Left cardiac atrium (tissue), 4 donors: ENCODE measurements at regions of chr11 and their contacts with region 1.

Region 1: DNA sequence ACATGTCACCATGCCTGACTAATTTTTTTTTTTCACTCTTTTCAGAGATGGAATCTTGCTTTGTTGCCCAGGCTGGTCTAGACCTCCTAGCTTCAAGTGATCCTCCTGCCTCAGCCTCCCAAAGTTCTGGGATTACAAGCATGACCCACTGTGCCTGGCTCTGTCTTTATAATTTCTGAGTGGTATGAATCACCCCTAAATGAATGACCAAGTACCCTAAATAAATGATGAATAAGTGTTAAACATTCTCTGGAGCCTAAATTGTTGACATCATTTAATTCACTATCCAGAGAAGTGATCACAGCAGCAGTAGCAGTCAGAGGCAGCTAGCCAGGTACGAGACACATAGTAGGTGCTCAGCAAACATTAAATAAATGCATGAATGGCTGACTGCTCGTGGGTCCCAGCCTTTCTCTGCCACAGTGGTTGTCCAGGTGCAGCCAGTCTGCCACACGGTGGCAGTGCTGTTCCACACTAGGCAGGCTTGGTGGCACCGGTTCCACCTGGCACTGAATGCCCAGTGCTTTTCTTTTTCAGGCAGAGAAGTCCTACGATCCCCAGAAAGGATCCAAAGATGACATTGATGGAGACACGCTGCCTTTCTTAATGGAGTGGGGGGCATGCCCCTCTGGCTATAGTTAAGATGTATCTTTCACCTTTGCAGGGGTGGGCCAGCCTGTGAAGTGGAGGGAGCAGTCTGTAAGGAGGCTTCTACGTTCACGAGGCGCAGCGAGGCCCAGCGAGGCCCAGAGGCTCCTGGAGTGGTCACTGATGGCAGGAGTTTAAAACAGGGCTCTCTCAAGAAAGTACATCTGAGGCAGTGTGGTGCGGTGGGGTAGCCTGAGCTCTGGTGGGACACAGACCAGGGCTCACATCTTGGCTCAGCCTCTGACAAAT is 8.7 kb upstream of the TTC12 start:
- DNase-seq: peak; percentile 83
- ATAC-seq: peak; percentile 92 to 95

Region 2: DNA sequence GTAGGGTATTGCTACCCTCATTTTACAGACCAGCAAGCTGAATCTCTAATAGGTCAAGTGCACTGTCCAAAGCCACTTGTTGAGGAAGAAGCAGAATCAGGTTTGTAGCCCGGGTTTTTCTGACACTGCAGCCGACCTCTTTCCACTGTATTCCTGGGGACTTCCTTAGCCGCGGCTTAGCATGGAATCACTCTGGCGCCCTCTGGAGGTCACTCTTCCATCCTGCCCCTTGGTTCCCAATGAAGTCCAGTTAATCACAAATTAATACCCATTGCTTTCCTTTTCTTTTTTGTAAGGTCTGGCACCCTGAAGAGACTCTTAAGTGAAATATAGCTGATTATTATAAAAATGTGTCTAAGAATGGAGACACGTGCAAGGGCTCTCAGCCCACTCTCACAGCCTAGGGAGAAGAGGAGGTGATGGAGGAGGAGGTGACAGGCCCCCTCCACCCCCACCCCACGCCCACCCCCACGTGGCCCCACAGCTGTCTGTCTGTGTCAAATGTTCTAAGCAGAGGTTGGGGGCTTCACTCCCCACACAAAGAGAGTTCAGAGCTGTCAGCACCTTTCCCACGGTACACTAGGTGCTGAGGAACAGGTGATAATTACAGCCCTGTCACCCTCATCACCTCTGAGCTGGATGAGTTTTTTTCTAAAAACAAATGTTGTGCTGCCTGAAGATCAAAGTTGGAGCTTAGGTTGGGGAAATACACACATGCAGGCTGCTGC is 227.2 kb after region 1 on chr11:
- intact Hi-C with region 1: loop called (anchors 1 to 5 kb)
- DNase-seq: peak; percentile 80
- ATAC-seq: peak; percentile 81 to 86